AG04450 (cell line): ENCODE measurements at regions of chr15 and their contacts with region 1.

Region 1: GRCh38 chr15:68875377-68876116 is 54.8 kb upstream of the SPESP1 start:
- DNase-seq: peak; percentile 65
- H3K4me3 ChIP-seq: peak overlapping the region; percentile 57
- H3K27ac ChIP-seq: peak overlapping the region; percentile 21
- H3K27me3 ChIP-seq: peaks cover 24% of the 10 kb centered on the region
- CTCF ChIP-seq: peak; percentile 86

Region 2: GRCh38 chr15:68559345-68560310 is 315.9 kb before region 1 on chr15:
- CTCF ChIA-PET with region 1: interaction called, 35 read pairs
- POLR2A ChIA-PET with region 1: interaction called, 6 read pairs
- DNase-seq: peak; percentile 37
- H3K4me3 ChIP-seq: peak overlapping the region; percentile 65
- H3K27ac ChIP-seq: no peak overlapping the region
- H3K27me3 ChIP-seq: peaks cover 8% of the 10 kb centered on the region
- CTCF ChIP-seq: peak; percentile 89

Region 3: DNA sequence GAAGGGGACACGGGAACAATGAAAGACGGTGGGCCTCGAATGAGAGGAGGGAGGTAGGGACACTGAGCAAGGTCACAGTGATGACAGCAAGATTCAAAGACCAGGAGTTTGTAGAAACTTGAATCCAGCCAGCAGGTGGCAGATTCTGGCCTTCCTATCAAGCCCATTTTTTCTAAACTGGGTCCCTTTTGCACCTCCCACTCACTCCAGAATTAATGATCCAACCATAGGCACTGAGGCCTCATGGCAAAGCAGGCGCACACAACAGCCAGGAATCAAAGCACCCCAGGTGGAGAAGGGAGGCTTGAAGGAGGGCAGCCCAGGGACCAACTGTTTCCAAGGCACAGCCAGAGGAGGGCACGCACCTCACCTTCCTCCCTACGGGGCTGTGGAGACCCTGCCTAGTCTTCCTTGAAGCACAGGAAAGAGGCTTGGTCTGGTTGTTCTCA is 145.1 kb before region 1 on chr15:
- CTCF ChIA-PET with region 1: interaction called, 50 read pairs
- POLR2A ChIA-PET with region 1: no interaction called
- DNase-seq: no peak
- H3K4me3 ChIP-seq: no peak overlapping the region
- H3K27ac ChIP-seq: no peak overlapping the region
- H3K27me3 ChIP-seq: peaks cover 22% of the 10 kb centered on the region
- CTCF ChIP-seq: peak; percentile 49

Region 4: DNA sequence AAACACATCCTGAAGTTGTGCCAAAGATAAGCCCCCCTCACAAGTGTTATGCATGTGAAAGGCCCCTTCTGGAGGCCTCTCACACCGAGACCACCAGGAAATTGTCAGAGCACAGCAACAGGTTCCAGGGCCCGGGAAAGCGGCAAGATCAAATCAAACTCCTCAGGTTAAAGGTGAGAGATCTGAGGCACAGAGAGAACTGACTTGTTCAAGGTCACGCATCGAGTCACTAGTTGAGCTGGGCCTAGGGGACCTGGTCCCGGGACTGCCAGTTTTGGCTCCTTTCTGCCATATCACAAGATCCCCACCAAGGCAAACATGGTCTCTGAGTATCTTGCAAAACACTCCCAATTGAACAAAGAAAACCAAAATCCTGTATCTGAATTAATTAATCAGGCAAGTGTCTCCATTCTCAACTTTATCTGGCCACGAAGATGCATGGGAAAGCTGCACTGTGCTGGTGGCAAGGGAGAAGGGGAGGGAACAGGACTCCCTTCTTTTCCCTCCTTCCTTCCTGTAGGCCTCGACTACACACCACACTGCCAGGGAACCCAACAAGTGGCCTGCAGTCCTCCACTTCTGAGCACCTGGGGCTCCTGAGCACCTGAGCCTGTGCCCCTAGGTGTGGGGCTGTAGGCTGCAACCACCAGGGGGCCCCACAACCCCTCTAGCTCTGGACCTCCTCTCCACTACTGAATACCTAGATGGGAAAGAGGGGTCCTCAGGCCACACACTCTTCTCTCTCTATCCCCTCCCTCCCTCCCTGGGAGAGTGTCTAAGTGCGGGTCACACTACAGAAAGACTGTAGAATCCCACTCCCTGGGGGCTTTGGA is 92.1 kb before region 1 on chr15:
- CTCF ChIA-PET with region 1: interaction called, 19 read pairs
- POLR2A ChIA-PET with region 1: no interaction called
- DNase-seq: no peak
- H3K4me3 ChIP-seq: no peak overlapping the region
- H3K27ac ChIP-seq: no peak overlapping the region
- H3K27me3 ChIP-seq: no peaks in the 10 kb centered on the region
- CTCF ChIP-seq: peak; percentile 56

Region 5: DNA sequence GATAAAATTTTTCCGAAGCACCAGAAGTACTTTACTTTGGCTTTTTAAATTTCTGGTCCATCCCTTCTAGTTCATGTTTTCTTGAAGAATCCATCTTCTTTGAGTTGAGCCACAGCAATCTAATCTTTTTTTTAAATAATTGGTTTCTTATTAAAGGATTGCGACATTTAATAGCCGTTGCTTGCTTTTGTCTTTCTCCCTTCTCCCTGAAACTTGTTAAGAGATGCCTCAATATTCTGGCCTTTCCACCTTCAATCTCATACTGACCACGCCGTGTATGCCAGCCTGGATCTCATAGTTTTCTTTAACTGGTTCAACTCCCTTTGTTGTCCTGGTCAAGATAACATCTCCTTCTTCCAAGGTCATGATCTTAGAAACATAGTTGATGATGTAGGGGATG is 558.7 kb after region 1 on chr15:
- CTCF ChIA-PET with region 1: no interaction called
- POLR2A ChIA-PET with region 1: no interaction called
- DNase-seq: no peak
- H3K4me3 ChIP-seq: no peak overlapping the region
- H3K27ac ChIP-seq: no peak overlapping the region
- H3K27me3 ChIP-seq: no peaks in the 10 kb centered on the region
- CTCF ChIP-seq: no peak